CD8-positive, alpha-beta memory T cell (primary cell): ENCODE measurements at regions of chr22 and their contacts with region 1.

Region 1: DNA sequence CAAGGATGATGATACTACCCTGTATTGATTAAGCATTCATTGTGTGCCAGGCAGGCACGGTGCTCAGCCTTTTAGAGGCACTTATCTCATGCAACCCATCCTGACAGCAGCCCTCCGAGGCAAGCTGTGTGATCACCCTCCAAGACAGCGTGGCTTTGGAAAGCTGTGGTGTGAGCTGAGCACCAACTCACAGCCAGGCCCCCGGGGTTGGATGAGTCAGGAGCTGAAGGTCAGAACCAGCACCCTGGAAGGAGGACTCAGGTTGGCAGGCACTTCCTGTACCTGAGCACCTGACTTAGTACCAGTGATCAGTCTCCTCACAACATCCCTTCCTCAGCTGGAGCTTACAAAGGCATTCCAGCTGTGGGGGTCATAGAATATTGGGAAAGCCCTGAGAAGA is 9.0 kb downstream of the PATZ1 start:
- DNase-seq: no peak
- H3K4me3 ChIP-seq: no peak overlapping the region
- H3K4me3 Mint-ChIP-seq: no peak overlapping the region
- H3K27ac ChIP-seq: no peak overlapping the region
- H3K27ac Mint-ChIP-seq: peak overlapping the region in 6 of 8 donors; percentile 17 to 71 (median 52)
- H3K4me1 ChIP-seq: peaks cover 27% of the 10 kb centered on the region
- H3K4me1 Mint-ChIP-seq: peaks cover 63 to 72% (median 70%) of the 10 kb centered on the region in 3 donors
- H3K27me3 ChIP-seq: no peaks in the 10 kb centered on the region
- H3K27me3 Mint-ChIP-seq: no peaks in the 10 kb centered on the region

Region 2: DNA sequence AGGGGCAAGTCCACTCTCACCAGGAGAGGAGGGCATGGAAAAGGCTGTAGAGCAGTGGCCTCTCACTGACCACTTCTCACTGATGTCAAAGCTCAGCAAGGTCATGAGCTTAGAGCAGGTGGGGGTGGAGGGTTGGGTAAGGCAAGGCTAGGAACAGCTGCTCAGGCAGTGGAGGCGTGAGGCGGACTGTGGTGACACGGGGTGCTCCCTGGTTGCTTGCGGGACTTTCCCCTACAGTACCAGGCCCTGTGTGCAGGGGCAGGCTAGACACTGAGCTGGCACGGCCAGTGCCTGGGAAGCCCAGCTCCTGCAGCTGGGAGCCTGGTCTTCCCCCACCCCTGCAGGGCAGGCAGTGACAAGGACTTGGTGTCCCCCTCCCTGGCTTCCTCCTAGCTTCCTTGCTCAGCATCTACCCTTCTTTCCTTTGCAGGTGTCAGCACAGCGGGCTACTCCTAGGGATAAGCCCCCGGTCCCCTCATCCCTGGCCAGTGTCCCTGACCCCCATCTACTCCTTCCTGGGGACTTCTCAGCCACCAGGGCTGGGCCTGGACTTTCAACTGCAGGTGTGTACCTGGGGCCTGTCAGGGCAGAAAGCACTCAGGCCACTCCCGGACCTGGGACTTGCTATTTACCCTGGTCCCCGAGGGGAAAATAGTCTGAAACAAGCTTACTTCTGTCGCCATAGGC is 279.3 kb after region 1 on chr22:
- CTCF ChIA-PET with region 1: no interaction called
- POLR2A ChIA-PET with region 1: no interaction called
- DNase-seq: no peak
- H3K4me3 ChIP-seq: no peak overlapping the region
- H3K4me3 Mint-ChIP-seq: peak overlapping the region in 1 of 7 donors; percentile 77
- H3K27ac ChIP-seq: no peak overlapping the region
- H3K27ac Mint-ChIP-seq: peak overlapping the region; percentile 33 to 85 (median 73)
- H3K4me1 ChIP-seq: no peaks in the 10 kb centered on the region
- H3K4me1 Mint-ChIP-seq: peaks cover 9 to 21% (median 14%) of the 10 kb centered on the region in 3 donors
- H3K27me3 ChIP-seq: no peaks in the 10 kb centered on the region
- H3K27me3 Mint-ChIP-seq: peaks cover 0 to 2% of the 10 kb centered on the region in 2 donors

Region 3: DNA sequence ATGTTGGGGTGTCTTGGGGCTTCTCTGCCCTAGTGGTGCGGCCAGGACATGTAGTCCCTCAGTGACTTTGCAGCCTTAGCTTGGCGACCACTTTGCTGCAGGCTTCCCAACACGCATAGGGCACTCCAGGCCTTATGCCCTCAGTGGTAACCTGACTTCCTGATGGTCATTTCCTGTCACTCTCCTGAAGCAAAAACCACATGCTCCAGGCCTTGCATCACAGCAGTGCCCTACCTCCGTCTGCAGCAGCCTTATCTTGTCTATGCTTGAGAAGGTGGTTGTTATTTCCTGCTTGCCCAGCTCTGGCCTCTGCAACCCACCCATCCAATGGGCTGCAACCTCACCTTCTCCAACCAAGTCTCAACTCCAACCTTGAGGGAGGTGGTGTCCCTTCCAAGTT is 358.3 kb after region 1 on chr22:
- CTCF ChIA-PET with region 1: no interaction called
- POLR2A ChIA-PET with region 1: interaction called, 14 read pairs
- DNase-seq: no peak
- H3K4me3 ChIP-seq: no peak overlapping the region
- H3K4me3 Mint-ChIP-seq: peak overlapping the region in 1 of 7 donors; percentile 50
- H3K27ac ChIP-seq: no peak overlapping the region
- H3K27ac Mint-ChIP-seq: peak overlapping the region in 4 of 8 donors; percentile 22 to 69 (median 52)
- H3K4me1 ChIP-seq: peaks cover 8% of the 10 kb centered on the region
- H3K4me1 Mint-ChIP-seq: peaks cover 17 to 20% (median 20%) of the 10 kb centered on the region in 3 donors
- H3K27me3 ChIP-seq: no peaks in the 10 kb centered on the region
- H3K27me3 Mint-ChIP-seq: no peaks in the 10 kb centered on the region